GM13976 (cell line): ENCODE measurements at regions of chr19 and their contacts with region 1.

Region 1: GRCh38 chr19:17772172-17772571 is 20.9 kb downstream of the FCHO1 start:
- DNase-seq: no peak
- CTCF ChIP-seq: no peak

Region 2: GRCh38 chr19:17711871-17712270 is 60.3 kb before region 1 on chr19:
- in situ Hi-C with region 1: loop called (anchors 5 kb)
- DNase-seq: no peak
- CTCF ChIP-seq: no peak

Region 3: DNA sequence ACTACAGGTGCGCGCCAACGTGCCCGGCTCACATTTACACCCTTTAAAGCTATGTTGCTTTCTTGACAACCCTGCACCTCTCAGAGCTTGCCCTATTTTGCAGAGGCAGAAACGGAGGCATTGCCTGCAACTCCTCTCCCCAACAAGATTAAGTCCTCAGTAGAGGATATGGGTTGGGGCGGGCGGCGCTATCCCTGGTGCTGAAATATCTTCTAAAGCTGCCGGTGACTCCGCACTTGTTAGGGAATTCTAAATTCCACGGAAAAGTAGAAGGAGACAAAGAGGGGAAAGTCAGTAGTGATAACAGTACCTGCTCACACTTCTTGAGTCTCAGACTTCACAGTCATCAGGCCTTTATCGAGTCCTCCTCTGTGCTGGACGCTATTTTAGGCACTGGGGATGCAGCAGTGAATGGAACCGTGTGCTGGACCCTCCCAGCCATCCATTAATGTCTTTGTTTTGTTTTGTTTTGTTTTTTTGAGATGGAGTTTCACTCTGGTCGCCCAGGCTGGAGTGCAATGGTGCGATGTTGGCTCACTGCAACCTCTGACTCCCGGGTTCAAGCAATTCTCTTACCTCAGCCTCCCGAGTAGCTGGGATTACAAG is 117.5 kb after region 1 on chr19:
- in situ Hi-C with region 1: no loop called
- DNase-seq: peak; percentile 49
- CTCF ChIP-seq: no peak